Natural killer cell (primary cell): ENCODE measurements at regions of chr12 and their contacts with region 1.

Region 1: DNA sequence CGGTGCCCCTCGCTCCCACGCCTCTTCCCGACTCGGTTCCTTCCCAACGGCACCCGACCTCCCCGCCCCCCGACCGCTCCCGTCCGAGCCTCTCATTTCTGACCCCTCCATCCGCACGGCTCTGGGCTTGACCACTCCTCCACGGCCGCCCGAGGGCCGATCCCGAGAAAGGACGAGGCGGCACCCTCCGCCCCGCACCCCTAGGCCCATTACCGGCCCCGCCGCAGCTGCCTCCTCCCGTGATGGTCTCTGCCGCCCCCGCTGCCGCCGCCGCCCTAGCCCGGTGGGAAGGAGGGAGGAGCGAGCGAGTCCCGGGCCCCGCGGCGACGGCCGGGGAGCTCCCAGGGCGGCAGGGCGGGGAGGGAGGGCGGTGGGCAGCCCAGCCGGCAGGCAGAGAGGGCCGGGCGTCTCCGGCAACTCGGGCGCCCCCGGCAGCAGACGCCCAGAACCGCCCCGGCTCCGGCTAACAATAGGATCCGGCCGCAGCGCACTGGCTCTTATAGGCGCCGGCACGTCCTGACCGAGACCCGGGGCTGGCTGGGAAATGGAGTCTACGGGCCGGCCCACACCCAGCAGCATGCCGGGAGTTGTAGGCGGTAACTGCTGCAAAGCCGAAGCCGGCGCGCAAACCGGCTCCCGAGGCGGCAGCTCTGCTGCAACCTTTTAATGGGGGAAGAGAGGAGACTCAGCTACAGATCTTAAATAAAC is at the start of gene CSRNP2:
- DNase-seq: peak; percentile 95 to 97
- ATAC-seq: peak; percentile 98 to 100 (median 99)
- H3K4me3 ChIP-seq: peak within 1 kb of the TSS; percentile 74
- H3K4me3 Mint-ChIP-seq: peak within 1 kb of the TSS; percentile 99
- H3K27ac ChIP-seq: peak within 1 kb of the TSS; percentile 49
- H3K27ac Mint-ChIP-seq: peak within 1 kb of the TSS; percentile 90
- H3K4me1 ChIP-seq: peaks cover 17% of the 10 kb centered on the region
- H3K4me1 Mint-ChIP-seq: peaks cover 18 to 39% of the 10 kb centered on the region in 2 donors
- H3K27me3 ChIP-seq: no peaks in the 10 kb centered on the region
- H3K27me3 Mint-ChIP-seq: no peaks in the 10 kb centered on the region
- CTCF ChIP-seq: no peak
- total RNA-seq, gene CSRNP2: 21.3 to 31.7 (median 25.1) TPM

Region 2: DNA sequence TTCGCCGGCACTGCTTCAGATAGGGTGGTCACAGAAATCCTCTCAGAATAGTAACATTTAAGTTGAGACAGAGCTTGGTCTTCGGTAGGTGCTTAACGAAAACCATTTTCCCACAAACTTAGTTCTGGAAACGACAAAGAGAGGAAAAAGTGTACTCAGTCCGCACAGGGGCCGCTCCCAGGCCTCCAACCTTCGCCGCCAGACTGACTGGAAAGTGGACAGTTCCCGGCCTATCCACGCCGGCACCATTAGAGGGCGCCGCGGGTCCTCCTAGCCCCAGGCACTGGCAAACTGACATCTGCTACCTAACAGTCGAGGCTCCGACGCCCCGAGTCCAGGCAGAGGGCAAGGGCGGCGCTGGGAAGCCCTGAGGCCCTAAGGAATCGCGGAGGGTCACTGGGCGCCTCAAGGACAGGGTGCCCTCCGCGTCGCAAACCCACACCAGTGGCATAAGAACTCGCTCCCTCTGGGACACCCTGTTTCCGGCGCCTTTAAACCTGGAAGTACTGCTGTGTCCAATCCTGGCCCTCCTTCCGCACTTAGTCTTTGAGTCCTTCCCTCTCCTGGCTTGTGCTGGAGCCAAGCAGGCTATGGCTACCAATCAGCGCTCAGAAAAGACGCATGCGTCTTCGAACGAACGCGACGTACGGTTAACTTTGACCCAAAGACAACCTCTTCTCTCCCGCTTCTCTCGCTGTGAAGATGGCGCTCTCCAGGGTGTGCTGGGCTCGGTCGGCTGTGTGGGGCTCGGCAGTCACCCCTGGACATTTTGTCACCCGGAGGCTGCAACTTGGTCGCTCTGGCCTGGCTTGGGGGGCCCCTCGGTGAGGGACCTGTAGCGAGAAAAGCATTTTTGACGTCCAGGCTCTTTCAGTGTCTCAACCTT is 35.4 kb before region 1 on chr12 and contains the start of gene LETMD1:
- intact Hi-C with region 1: loop called (anchors 1 kb)
- DNase-seq: peak; percentile 84 to 98
- ATAC-seq: peak; percentile 93 to 98 (median 94)
- H3K4me3 ChIP-seq: peak within 1 kb of the TSS; percentile 63
- H3K4me3 Mint-ChIP-seq: peak within 1 kb of the TSS; percentile 91
- H3K27ac ChIP-seq: peak within 1 kb of the TSS; percentile 83
- H3K27ac Mint-ChIP-seq: peak within 1 kb of the TSS; percentile 90 to 96
- H3K4me1 ChIP-seq: peaks cover 19% of the 10 kb centered on the region
- H3K4me1 Mint-ChIP-seq: peaks cover 26 to 37% of the 10 kb centered on the region in 2 donors
- H3K27me3 ChIP-seq: no peaks in the 10 kb centered on the region
- H3K27me3 Mint-ChIP-seq: no peaks in the 10 kb centered on the region
- CTCF ChIP-seq: peak; percentile 95
- total RNA-seq, gene LETMD1: 57.1 to 71.8 (median 58.2) TPM

Region 3: GRCh38 chr12:51198568-51199365 is 115.5 kb after region 1 on chr12:
- intact Hi-C with region 1: no loop called
- DNase-seq: no peak
- ATAC-seq: no peak
- H3K4me3 ChIP-seq: no peak overlapping the region
- H3K4me3 Mint-ChIP-seq: no peak overlapping the region
- H3K27ac ChIP-seq: no peak overlapping the region
- H3K27ac Mint-ChIP-seq: no peak overlapping the region
- H3K4me1 ChIP-seq: no peaks in the 10 kb centered on the region
- H3K4me1 Mint-ChIP-seq: no peaks in the 10 kb centered on the region
- H3K27me3 ChIP-seq: no peaks in the 10 kb centered on the region
- H3K27me3 Mint-ChIP-seq: no peaks in the 10 kb centered on the region
- CTCF ChIP-seq: no peak

Region 4: DNA sequence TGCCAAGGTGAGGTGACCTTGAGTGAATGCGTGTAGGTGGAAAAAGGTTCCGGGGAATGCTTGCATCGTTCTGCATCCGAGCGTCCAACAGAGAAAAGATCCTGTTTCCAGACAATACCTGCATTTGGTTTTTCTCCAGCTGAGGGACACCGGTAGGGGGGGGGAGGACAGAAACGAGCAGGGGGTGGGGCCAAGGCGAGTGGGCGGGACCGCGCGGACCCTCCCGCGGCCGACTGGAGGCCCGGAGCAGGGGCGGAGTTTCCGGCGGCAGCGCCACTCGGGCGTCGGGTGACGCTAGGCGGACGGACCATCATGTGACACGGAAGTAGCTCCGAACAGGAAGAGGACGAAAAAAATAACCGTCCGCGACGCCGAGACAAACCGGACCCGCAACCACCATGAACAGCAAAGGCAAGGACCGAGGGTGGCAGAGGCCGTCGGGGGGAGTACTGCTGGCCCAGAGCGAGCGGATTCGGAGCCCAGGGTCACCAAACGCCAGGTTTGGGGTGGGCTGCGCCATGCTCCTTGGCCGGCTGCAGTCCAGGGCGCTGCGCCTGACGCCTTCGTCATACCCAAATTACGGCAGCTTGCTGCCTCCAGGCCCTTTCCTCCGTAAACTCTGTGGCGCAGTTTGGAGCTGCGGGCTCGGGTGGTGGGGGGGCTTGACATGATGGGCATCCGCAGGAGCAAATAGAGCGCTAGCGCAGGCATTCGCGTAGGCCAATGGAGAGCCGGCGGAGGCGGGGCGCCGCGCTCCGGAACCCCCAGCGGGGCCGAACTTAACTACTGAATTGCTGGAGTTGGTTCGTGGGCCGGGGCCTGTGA is 155.4 kb after region 1 on chr12 and contains the start of gene DAZAP2:
- intact Hi-C with region 1: loop called (anchors 1 kb)
- DNase-seq: peak; percentile 91 to 98
- ATAC-seq: peak; percentile 88 to 96 (median 90)
- H3K4me3 ChIP-seq: peak within 1 kb of the TSS; percentile 100
- H3K4me3 Mint-ChIP-seq: peak within 1 kb of the TSS; percentile 97
- H3K27ac ChIP-seq: peak within 1 kb of the TSS; percentile 100
- H3K27ac Mint-ChIP-seq: peak within 1 kb of the TSS; percentile 98 to 99
- H3K4me1 ChIP-seq: peaks cover 24% of the 10 kb centered on the region
- H3K4me1 Mint-ChIP-seq: peaks cover 41 to 46% of the 10 kb centered on the region in 2 donors
- H3K27me3 ChIP-seq: no peaks in the 10 kb centered on the region
- H3K27me3 Mint-ChIP-seq: no peaks in the 10 kb centered on the region
- CTCF ChIP-seq: no peak
- total RNA-seq, gene DAZAP2: 316 to 350 (median 325) TPM